Endothelial cell of umbilical vein (primary cell): ENCODE measurements at regions of chr1 and their contacts with region 1.

Region 1: DNA sequence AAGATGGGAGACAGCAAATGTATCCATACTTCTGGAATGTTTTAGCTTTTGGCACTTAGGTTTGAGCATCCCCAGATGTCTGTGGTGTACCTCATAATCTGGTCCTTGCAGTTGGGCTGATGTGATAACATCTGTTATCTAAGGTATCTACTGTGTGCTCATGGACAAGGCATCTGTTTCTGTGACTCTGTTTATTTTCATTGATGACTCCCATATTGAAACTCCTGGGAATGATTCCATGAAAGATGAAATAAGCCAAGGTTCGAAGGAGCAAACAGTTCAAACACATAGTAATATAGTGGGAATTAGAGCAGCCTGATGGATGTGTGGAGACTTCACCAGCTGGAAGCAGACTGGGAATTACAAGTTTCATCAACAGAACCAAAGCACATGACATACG is 20.7 kb upstream of the TRIM45 start:
- DNase-seq: no peak
- H3K4me3 ChIP-seq: no peak overlapping the region
- H3K27ac ChIP-seq: no peak overlapping the region
- H3K4me1 ChIP-seq: no peaks in the 10 kb centered on the region
- H3K27me3 ChIP-seq: no peaks in the 10 kb centered on the region
- CTCF ChIP-seq: no peak
- POLR2A ChIP-seq: no peak

Region 2: GRCh38 chr1:117201813-117202212 is 59.6 kb after region 1 on chr1:
- CTCF ChIA-PET with region 1: no interaction called
- POLR2A ChIA-PET with region 1: no interaction called
- dilution Hi-C with region 1: no loop called
- intact Hi-C with region 1: loop called (anchors 1 kb)
- DNase-seq: no peak
- H3K4me3 ChIP-seq: no peak overlapping the region
- H3K27ac ChIP-seq: no peak overlapping the region
- H3K4me1 ChIP-seq: no peaks in the 10 kb centered on the region
- H3K27me3 ChIP-seq: peaks cover 0 to 3% of the 10 kb centered on the region in 2 experiments
- CTCF ChIP-seq: no peak
- POLR2A ChIP-seq: no peak

Region 3: GRCh38 chr1:117685936-117686806 is 544.0 kb after region 1 on chr1:
- CTCF ChIA-PET with region 1: no interaction called
- POLR2A ChIA-PET with region 1: no interaction called
- dilution Hi-C with region 1: no loop called
- intact Hi-C with region 1: no loop called
- DNase-seq: no peak
- H3K4me3 ChIP-seq: no peak overlapping the region
- H3K27ac ChIP-seq: no peak overlapping the region
- H3K4me1 ChIP-seq: peaks cover 22% of the 10 kb centered on the region
- H3K27me3 ChIP-seq: peaks cover 0 to 6% of the 10 kb centered on the region in 2 experiments
- CTCF ChIP-seq: peak in 1 of 2 donors; percentile 24
- POLR2A ChIP-seq: no peak

Region 4: GRCh38 chr1:118097622-118098360 is 955.6 kb after region 1 on chr1:
- CTCF ChIA-PET with region 1: no interaction called
- POLR2A ChIA-PET with region 1: no interaction called
- dilution Hi-C with region 1: no loop called
- intact Hi-C with region 1: no loop called
- DNase-seq: no peak
- H3K4me3 ChIP-seq: no peak overlapping the region
- H3K27ac ChIP-seq: no peak overlapping the region
- H3K4me1 ChIP-seq: no peaks in the 10 kb centered on the region
- H3K27me3 ChIP-seq: no peaks in the 10 kb centered on the region
- CTCF ChIP-seq: no peak
- POLR2A ChIP-seq: no peak